ENCODE measurements at regions of chr2 and their contacts with region 1.

Region 1: GRCh38 chr2:8681786-8682692 is at the start of gene ID2:
- DNase-seq: peak; percentile 100
- H3K4me3 ChIP-seq: peak within 1 kb of the TSS; percentile 97
- H3K27ac ChIP-seq: peak within 1 kb of the TSS; percentile 91
- H3K4me1 ChIP-seq: peaks cover 39% of the 10 kb centered on the region
- CTCF ChIP-seq: no peak
- total RNA-seq, gene ID2: 439 and 498 TPM in 2 replicates

Region 2: GRCh38 chr2:7567646-7568045 is 1114.4 kb before region 1 on chr2:
- CTCF ChIA-PET with region 1: no interaction called
- POLR2A ChIA-PET with region 1: interaction called, 5 read pairs
- intact Hi-C with region 1: loop called (anchors 1 kb)
- DNase-seq: peak; percentile 94
- H3K4me3 ChIP-seq: peak overlapping the region; percentile 31
- H3K27ac ChIP-seq: peak overlapping the region; percentile 80
- H3K4me1 ChIP-seq: peaks cover 33% of the 10 kb centered on the region
- CTCF ChIP-seq: peak; percentile 76

Region 3: GRCh38 chr2:8044046-8044594 is 637.9 kb before region 1 on chr2:
- CTCF ChIA-PET with region 1: no interaction called
- POLR2A ChIA-PET with region 1: interaction called, 10 read pairs
- intact Hi-C with region 1: no loop called
- DNase-seq: no peak
- H3K4me3 ChIP-seq: no peak overlapping the region
- H3K27ac ChIP-seq: no peak overlapping the region
- H3K4me1 ChIP-seq: no peaks in the 10 kb centered on the region
- CTCF ChIP-seq: no peak

Region 4: GRCh38 chr2:8477552-8478470 is 204.2 kb before region 1 on chr2:
- CTCF ChIA-PET with region 1: interaction called, 3 read pairs
- POLR2A ChIA-PET with region 1: interaction called, 14 read pairs
- intact Hi-C with region 1: loop called (anchors 1 kb)
- DNase-seq: peak; percentile 94
- H3K4me3 ChIP-seq: peak overlapping the region; percentile 50
- H3K27ac ChIP-seq: peak overlapping the region; percentile 97
- H3K4me1 ChIP-seq: peaks cover 99% of the 10 kb centered on the region
- CTCF ChIP-seq: no peak

Region 5: DNA sequence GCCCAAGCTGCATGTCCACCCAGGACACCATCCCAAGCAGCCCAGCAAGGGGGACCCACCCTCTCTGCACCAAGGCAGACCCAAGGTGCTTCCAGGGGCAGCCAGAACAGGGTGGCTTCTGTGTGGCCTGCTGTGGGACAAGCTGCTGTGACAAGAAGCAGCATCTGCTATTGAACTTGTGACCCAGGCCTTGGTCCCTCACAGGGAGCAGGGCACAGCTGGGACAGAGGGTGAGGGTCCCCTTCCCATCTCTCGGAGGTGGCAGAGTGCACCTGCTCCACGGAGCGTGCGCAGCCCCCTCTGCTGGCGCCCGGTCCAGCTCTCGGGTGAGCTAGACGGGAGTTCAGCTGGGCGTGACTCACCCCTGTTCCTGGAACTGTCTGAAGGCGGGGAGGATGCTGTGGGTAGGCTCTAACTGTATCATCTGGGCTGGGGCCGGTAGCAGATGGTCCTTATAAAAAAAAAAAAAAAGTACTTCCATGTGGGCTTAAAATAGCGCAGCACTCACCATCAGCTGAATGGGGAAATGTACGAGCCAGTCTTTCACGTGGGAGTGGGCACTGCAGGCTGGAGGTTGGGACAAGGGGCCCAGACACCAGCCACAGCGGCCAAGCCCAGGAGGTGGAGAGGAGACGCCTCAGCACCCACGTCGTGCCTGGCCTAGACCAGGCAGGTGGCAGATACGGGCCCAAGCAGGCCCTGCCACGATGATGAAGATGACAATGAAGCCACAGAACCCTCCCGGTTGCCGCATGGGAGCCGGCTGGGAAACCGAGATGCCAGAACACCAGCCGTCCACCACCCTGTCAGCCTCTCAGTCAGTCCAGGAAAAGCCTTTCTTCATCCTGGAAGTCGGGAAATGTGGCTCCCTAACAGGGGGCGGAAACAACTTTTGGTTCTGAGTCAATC is 137.0 kb before region 1 on chr2:
- CTCF ChIA-PET with region 1: no interaction called
- POLR2A ChIA-PET with region 1: interaction called, 46 read pairs
- intact Hi-C with region 1: loop called (anchors 1 kb)
- DNase-seq: peak; percentile 95
- H3K4me3 ChIP-seq: peak overlapping the region; percentile 40
- H3K27ac ChIP-seq: peak overlapping the region; percentile 98
- H3K4me1 ChIP-seq: peaks cover 100% of the 10 kb centered on the region
- CTCF ChIP-seq: peak; percentile 81

Region 6: DNA sequence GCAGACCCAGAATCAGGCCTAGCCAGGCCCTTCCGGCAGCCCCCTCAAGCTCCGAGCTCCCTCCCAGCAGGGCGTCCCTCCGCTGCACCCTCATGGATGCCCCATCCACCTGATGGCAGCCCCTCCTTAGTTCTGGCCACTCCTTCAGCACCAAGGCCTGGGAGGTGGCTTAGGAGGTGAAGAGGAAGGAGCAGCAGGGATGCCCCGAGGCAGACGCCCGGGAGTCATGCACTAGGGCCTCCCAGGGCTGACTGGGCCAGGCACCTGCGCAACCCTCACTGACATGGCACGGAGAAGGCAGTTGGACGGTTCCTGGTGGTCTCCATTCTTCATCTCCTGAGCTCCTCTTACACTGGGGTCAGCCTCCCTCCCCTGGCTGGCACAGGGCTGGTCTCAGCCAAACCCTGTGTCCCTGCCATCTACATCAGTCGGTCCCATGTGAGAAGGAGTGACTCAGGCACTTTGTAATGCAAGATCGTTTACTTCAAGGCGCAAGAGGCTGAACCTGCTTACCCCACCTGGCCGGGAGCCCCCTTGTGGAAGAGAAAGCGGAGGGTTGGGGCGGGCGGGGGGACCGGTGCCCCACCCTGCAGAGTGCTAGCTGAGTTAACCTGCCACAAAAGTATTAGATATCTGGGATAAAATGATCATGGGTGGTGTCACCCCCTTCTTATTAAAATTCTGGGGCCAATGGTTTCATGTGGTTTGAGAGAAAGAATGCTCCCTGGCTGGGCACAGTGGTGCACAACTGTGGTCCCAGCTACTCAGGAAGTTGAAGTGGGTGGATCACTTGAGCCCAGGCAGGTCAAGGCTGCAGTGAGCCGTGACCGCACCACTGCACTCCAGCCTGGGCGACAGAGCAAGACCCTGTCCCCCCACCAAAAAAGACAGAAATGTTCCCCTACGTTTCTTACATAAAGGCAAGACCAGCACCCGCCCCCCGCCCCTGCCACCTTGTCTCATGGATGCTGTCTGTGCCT is 53.5 kb before region 1 on chr2:
- CTCF ChIA-PET with region 1: no interaction called
- POLR2A ChIA-PET with region 1: interaction called, 29 read pairs
- intact Hi-C with region 1: loop called (anchors 1 kb)
- DNase-seq: peak; percentile 78
- H3K4me3 ChIP-seq: peak overlapping the region; percentile 70
- H3K27ac ChIP-seq: peak overlapping the region; percentile 82
- H3K4me1 ChIP-seq: peaks cover 69% of the 10 kb centered on the region
- CTCF ChIP-seq: peak; percentile 81

Region 7: DNA sequence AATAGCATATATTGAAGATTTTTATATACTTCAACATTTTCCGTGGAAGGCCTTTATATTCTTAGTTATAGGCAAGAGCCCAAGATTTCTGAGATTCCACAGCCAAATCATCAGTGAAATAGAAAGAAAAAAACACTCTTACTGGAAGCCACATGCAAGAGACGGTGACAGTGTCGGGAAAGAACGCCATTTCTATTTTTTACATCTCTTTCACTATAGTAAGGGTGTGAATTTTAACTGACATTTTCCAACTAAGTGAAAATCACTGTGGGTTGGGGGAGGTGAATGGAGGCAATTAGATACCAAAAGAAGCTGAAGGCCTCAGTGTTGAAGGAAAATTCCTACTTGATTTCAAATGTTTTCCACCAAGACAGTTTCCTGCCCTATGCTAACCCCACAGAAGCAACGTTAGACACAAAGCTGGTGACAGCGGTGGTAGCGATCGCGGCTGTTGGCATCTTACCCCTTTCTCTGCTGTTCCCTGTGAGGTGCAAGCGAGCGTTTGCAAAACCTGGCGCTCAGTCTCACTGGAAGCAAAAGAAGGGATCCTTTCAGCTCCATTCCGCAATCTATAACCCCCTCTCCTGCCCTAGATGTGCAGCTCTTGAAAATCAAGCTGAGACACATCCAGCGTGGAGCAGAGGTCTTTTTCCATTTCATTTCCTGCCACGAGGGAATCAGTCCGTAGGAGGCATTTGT is 19.8 kb after region 1 on chr2:
- CTCF ChIA-PET with region 1: no interaction called
- POLR2A ChIA-PET with region 1: no interaction called
- intact Hi-C with region 1: no loop called
- DNase-seq: no peak
- H3K4me3 ChIP-seq: no peak overlapping the region
- H3K27ac ChIP-seq: no peak overlapping the region
- H3K4me1 ChIP-seq: no peaks in the 10 kb centered on the region
- CTCF ChIP-seq: no peak

Measured in OCI-LY7 (cell line).